ENCODE measurements at regions of chr7 and their contacts with region 1.

Region 1: DNA sequence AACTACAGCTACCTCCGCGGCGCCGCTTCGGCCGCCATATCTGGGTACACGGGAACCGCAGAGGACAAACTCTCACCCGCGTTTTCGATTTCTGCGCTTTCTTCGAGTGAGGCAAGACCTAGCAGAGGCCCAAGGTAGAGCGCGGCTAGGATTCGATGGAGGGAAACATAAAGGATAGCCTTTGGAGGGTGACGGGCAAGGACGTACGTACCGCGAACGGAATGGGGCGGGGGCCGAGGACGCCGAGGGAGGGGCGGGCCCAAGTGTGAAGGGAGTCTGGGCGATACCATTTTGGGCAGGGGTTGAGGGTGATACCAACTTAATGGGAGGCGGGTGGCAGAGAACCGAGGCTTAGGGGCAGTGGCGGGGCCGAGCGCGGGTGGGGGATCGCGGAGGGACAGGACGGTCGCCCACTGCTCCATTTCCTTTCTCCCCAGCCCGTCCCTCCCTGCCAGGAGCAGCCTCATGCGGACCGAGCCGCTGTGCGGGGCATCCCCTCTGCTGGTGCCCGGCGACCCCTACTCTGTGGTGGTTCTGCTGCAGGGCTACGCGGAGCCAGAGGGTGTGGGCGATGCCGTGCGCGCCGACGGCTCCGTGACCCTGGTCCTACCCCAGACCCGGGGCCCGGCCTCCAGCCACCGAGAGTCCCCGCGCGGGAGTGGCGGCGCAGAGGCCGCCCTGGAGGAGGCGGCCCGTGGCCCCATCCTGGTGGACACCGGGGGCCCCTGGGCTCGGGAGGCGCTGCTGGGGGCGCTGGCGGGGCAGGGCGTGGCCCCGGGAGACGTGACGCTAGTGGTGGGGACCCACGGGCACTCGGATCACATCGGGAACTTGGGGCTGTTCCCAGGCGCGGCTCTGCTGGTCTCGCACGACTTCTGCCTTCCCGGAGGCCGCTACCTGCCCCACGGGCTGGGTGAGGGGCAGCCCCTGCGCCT is at the start of gene MBLAC1:
- DNase-seq: peak; percentile 90 to 93 (median 91)
- ATAC-seq: peak; percentile 91 to 95 (median 94)
- H3K4me3 ChIP-seq: peak within 1 kb of the TSS; percentile 74 to 99 (median 94)
- H3K27ac ChIP-seq: peak within 1 kb of the TSS; percentile 88 to 99 (median 97)
- H3K4me1 ChIP-seq: peaks cover 0 to 41% (median 18%) of the 10 kb centered on the region in 12 donors
- H3K27me3 ChIP-seq: no peaks in the 10 kb centered on the region
- CTCF ChIP-seq: no peak
- POLR2A ChIP-seq: peak in 1 of 2 donors; percentile 28
- total RNA-seq, gene MBLAC1: 1.3 to 2.7 (median 2.0) TPM

Region 2: DNA sequence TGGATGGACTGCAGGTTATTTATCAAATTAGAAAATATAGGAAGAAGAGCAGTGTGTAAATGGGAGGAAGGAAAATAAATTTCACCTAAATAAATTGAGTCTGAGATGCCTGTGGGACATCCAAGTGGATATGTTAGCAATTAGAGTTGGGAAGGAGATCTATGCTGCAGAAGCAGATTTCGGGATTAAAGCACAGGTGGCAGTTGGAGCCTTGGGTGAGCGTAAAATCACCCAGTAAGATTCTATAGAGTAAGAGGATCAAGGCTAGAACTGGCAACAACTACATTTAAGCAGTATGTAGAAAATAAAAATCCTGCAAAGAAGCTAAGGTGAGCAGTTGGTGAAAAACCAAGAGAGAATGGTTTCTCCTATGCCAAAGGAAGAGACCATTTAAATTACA is 216.2 kb before region 1 on chr7:
- intact Hi-C with region 1: loop called in 1 of 10 experiments (anchors 5 kb)
- DNase-seq: no peak
- ATAC-seq: no peak
- H3K4me3 ChIP-seq: no peak overlapping the region
- H3K27ac ChIP-seq: no peak overlapping the region
- H3K4me1 ChIP-seq: peaks cover 0 to 18% (median 2%) of the 10 kb centered on the region in 12 donors
- H3K27me3 ChIP-seq: no peaks in the 10 kb centered on the region
- CTCF ChIP-seq: no peak
- POLR2A ChIP-seq: no peak

Region 3: DNA sequence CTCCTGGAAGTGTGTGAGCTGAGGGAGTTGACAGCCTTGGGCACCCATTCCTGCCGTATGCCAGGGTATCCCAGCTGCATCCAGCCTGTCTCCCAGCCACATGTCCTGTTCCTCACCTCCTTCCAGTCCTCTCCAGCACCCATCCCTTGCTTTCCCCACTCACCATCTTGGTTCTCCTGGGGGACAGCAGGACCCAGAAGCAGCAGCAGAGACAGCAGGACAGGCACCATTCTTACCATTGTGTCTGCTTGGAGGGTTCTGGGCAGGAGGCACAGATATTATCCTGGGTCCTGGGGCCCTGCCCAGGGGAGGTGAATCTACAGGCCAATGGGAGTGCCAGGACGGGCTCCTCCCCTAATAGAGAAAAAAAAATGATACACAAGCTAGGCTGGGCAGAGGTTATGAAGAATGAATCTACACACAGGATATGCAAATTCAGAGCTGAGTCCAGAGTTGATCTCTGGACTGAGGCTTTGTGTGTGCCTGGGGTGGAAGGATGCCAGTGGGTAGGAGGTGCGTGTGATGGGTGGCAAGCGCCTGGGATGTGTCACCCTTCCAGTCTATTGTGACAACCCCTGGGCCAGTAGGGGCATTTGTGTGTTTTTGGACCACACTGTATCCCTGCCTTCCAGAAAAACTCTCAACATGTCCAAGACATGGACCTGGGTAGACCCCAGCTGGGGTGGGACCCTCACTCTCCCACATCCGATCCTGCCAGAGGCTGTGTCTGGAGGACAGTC is 151.2 kb before region 1 on chr7 and contains the start of gene AZGP1:
- intact Hi-C with region 1: loop called in 1 of 10 experiments (anchors 5 kb)
- DNase-seq: peak in 4 of 5 donors; percentile 48 to 77 (median 60)
- ATAC-seq: peak; percentile 87 to 93 (median 92)
- H3K4me3 ChIP-seq: peak within 1 kb of the TSS in 10 of 12 donors; percentile 12 to 49 (median 24)
- H3K27ac ChIP-seq: peak within 1 kb of the TSS in 9 of 12 donors; percentile 29 to 79 (median 60)
- H3K4me1 ChIP-seq: peaks cover 0 to 6% (median 0%) of the 10 kb centered on the region in 12 donors
- H3K27me3 ChIP-seq: peaks cover 0 to 4% (median 0%) of the 10 kb centered on the region in 9 donors
- CTCF ChIP-seq: no peak
- POLR2A ChIP-seq: peak in 1 of 2 donors; percentile 38
- total RNA-seq, gene AZGP1: 31.8 to 214 (median 95.4) TPM

Region 4: DNA sequence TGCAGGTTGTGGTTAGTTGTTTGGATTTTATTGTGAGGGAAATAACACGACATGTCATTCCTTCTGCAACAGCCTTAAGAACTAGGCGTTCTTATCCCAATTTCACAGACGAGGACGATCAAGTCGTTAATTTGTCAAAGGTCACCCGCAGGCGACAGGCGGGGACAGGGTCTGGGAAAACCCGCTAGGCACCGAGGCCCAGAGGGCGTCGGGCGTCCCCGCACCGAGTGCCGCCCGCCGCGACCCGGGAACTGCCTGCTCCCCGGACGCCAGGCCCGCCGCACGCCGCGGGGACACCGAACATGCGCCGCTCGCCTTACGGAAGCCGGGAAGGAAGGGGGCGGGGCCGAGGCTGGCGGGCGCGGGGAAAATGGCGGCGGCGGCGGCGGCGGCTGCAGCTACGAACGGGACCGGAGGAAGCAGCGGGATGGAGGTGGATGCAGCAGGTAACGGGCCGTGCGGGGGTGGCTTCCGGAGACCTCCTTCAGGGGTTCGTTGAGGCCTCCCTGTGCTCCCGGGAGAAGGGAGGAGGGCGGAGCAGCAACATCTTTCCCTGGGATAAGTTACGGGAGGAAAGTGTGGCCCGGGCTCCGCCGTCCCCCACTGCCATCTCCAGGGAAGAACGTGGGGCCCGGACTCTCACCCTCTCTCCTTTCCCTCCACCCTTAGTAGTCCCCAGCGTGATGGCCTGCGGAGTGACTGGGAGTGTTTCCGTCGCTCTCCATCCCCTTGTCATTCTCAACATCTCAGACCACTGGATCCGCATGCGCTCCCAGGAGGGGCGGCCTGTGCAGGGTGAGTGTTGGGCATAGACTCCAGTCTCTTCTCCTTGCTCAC is 38.4 kb before region 1 on chr7 and contains the start of gene COPS6:
- intact Hi-C with region 1: loop called in 2 of 10 experiments (anchors 5 kb)
- DNase-seq: peak; percentile 88 to 94 (median 91)
- ATAC-seq: peak; percentile 48 to 88 (median 88)
- H3K4me3 ChIP-seq: peak within 1 kb of the TSS; percentile 62 to 96 (median 87)
- H3K27ac ChIP-seq: peak within 1 kb of the TSS; percentile 70 to 97 (median 93)
- H3K4me1 ChIP-seq: peaks cover 0 to 31% (median 16%) of the 10 kb centered on the region in 12 donors
- H3K27me3 ChIP-seq: no peaks in the 10 kb centered on the region
- CTCF ChIP-seq: no peak
- POLR2A ChIP-seq: peak in 1 of 2 donors; percentile 89
- total RNA-seq, gene COPS6: 53.3 to 120 (median 108) TPM

Region 5: GRCh38 chr7:100101016-100101862 is 26.0 kb before region 1 on chr7 and contains the starts of genes AP4M1 and MCM7:
- intact Hi-C with region 1: loop called in 2 of 10 experiments (anchors 2 kb)
- DNase-seq: peak; percentile 99
- ATAC-seq: peak; percentile 94 to 96 (median 96)
- H3K4me3 ChIP-seq: peak within 1 kb of the TSS; percentile 59 to 93 (median 76)
- H3K27ac ChIP-seq: peak within 1 kb of the TSS; percentile 81 to 97 (median 93)
- H3K4me1 ChIP-seq: peaks cover 0 to 28% (median 21%) of the 10 kb centered on the region in 12 donors
- H3K27me3 ChIP-seq: no peaks in the 10 kb centered on the region
- CTCF ChIP-seq: no peak
- POLR2A ChIP-seq: peak in 1 of 2 donors; percentile 40
- total RNA-seq, gene AP4M1: 8.9 to 19.3 (median 12.3) TPM
- total RNA-seq, gene MCM7: 12.8 to 34.4 (median 17.2) TPM